ENCODE measurements at regions of chrX and their contacts with region 1.

Region 1: DNA sequence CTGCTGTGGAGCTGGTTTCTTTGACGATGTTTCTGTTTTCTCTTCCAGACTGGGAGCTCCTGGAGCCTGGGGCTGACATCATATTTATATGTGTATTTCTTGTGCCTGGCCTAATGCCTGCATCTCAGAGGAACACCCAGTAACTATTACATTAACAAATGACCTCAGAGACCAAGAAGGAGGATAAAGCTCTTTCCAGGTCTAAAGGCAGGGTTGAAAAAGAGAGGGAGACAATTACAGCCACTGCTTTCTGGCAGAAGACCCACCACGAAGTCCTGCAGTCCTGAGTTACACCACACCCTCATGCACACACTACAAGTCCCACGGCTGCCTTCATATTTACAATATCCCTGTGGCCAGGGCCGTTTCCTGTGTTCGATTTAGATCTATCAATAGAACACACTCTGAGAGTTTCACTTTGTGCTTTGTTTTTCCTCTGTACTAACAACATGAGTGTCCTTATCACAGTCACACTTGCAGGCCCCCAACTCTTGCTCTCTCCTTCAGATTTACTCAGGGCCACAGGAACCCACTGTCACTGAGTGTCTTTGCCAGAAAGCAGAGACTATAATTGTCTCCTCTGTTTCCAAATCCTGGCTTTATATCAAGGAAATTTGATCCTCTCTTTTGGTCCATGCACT is 535.5 kb downstream of the MID1IP1 start:
- DNase-seq: peak; percentile 30
- H3K4me3 ChIP-seq: no peak overlapping the region
- H3K27ac ChIP-seq: peak overlapping the region; percentile 62 to 71
- H3K4me1 ChIP-seq: no peaks in the 10 kb centered on the region
- H3K27me3 ChIP-seq: no peaks in the 10 kb centered on the region
- CTCF ChIP-seq: no peak
- POLR2A ChIP-seq: no peak

Region 2: GRCh38 chrX:39519030-39519488 is 182.3 kb after region 1 on chrX:
- intact Hi-C with region 1: loop called (anchors 10 kb)
- DNase-seq: peak; percentile 36
- H3K4me3 ChIP-seq: no peak overlapping the region
- H3K27ac ChIP-seq: no peak overlapping the region
- H3K4me1 ChIP-seq: no peaks in the 10 kb centered on the region
- H3K27me3 ChIP-seq: no peaks in the 10 kb centered on the region
- CTCF ChIP-seq: no peak
- POLR2A ChIP-seq: no peak

Measured in prostate gland (tissue), 2 donors.